ENCODE measurements at regions of chr10 and their contacts with region 1.

Region 1: GRCh38 chr10:60444494-60445064 is 54.9 kb upstream of the ANK3 start:
- DNase-seq: no peak
- ATAC-seq: no peak
- H3K4me3 ChIP-seq: no peak overlapping the region
- H3K4me3 Mint-ChIP-seq: no peak overlapping the region
- H3K27ac ChIP-seq: no peak overlapping the region
- H3K27ac Mint-ChIP-seq: no peak overlapping the region
- H3K4me1 ChIP-seq: peaks cover 7 to 8% of the 10 kb centered on the region in 2 donors
- H3K4me1 Mint-ChIP-seq: peaks cover 8% of the 10 kb centered on the region
- H3K27me3 ChIP-seq: no peaks in the 10 kb centered on the region
- H3K27me3 Mint-ChIP-seq: no peaks in the 10 kb centered on the region
- CTCF ChIP-seq: peak; percentile 27

Region 2: DNA sequence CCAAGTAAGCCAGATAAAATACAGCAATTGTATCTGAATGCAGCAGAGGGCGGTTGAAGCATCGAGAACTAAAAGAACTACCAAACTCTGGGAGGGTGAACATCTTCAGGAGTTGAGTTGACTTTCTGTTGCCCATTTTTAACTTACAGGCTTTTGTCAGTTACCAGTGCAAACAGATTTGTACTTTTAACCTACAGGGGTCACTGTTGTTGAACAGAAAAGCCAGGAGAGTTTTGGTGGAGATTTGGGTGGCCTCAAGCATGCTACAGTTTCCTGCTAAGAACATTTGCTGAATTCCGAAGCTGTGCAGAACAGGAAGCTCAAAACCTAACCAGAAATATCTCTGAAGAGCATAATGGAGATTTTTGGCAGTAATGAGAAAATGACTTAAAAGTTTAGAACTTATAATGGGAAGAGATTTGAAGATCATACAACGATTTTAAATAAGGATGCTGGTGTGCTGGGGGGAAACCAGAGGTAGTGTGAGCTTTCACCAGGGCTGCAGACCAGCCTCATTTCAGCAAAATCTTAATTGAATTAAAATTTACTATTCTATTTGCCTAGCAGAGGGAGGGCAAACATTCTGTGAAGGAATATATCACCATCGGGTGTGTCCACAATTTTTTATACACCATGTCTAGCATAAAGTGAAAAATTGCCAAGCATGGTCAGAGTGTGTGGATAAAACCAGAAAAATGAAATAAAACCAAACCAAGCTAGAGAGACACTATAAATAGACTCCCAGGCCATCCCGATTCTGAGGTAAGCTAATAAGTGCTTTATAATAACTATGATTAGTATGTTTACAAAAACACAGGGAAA is 329.6 kb before region 1 on chr10:
- CTCF ChIA-PET with region 1: interaction called, 26 read pairs
- POLR2A ChIA-PET with region 1: no interaction called
- intact Hi-C with region 1: no loop called
- DNase-seq: peak; percentile 61
- ATAC-seq: peak; percentile 53
- H3K4me3 ChIP-seq: no peak overlapping the region
- H3K4me3 Mint-ChIP-seq: no peak overlapping the region
- H3K27ac ChIP-seq: no peak overlapping the region
- H3K27ac Mint-ChIP-seq: no peak overlapping the region
- H3K4me1 ChIP-seq: peaks cover 4 to 6% of the 10 kb centered on the region in 2 donors
- H3K4me1 Mint-ChIP-seq: no peaks in the 10 kb centered on the region
- H3K27me3 ChIP-seq: no peaks in the 10 kb centered on the region
- H3K27me3 Mint-ChIP-seq: no peaks in the 10 kb centered on the region
- CTCF ChIP-seq: peak; percentile 68

Region 3: GRCh38 chr10:60426400-60426799 is 18.2 kb before region 1 on chr10:
- CTCF ChIA-PET with region 1: interaction called, 33 read pairs
- POLR2A ChIA-PET with region 1: no interaction called
- intact Hi-C with region 1: no loop called
- DNase-seq: no peak
- ATAC-seq: no peak
- H3K4me3 ChIP-seq: no peak overlapping the region
- H3K4me3 Mint-ChIP-seq: no peak overlapping the region
- H3K27ac ChIP-seq: no peak overlapping the region
- H3K27ac Mint-ChIP-seq: no peak overlapping the region
- H3K4me1 ChIP-seq: peaks cover 0 to 9% of the 10 kb centered on the region in 2 donors
- H3K4me1 Mint-ChIP-seq: peaks cover 6% of the 10 kb centered on the region
- H3K27me3 ChIP-seq: no peaks in the 10 kb centered on the region
- H3K27me3 Mint-ChIP-seq: no peaks in the 10 kb centered on the region
- CTCF ChIP-seq: no peak

Region 4: DNA sequence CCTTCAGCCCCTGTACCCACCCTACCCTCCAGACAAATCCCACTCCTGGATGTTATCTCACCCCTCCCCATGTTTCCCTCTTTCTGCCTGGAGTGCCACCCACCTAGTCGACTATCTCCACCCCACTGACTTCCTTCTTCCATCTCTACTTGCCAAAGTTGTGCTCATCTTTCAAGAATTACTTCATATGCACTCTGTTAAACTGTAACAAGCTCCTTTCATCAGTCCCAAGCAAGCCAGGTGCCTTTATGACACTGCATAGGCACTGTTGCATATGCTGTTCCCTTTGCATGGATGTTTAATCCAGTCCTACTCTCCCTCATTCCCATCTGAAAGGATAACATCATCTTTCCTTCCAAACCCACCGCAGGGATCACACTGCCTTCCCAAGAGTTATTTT is 324.8 kb after region 1 on chr10:
- CTCF ChIA-PET with region 1: interaction called, 7 read pairs
- POLR2A ChIA-PET with region 1: no interaction called
- intact Hi-C with region 1: loop called (anchors 2 kb)
- DNase-seq: no peak
- ATAC-seq: no peak
- H3K4me3 ChIP-seq: no peak overlapping the region
- H3K4me3 Mint-ChIP-seq: no peak overlapping the region
- H3K27ac ChIP-seq: no peak overlapping the region
- H3K27ac Mint-ChIP-seq: no peak overlapping the region
- H3K4me1 ChIP-seq: no peaks in the 10 kb centered on the region
- H3K4me1 Mint-ChIP-seq: peaks cover 2% of the 10 kb centered on the region
- H3K27me3 ChIP-seq: no peaks in the 10 kb centered on the region
- H3K27me3 Mint-ChIP-seq: no peaks in the 10 kb centered on the region
- CTCF ChIP-seq: no peak